GM12878 (cell line): ENCODE measurements at regions of chr3 and their contacts with region 1.

Region 1: DNA sequence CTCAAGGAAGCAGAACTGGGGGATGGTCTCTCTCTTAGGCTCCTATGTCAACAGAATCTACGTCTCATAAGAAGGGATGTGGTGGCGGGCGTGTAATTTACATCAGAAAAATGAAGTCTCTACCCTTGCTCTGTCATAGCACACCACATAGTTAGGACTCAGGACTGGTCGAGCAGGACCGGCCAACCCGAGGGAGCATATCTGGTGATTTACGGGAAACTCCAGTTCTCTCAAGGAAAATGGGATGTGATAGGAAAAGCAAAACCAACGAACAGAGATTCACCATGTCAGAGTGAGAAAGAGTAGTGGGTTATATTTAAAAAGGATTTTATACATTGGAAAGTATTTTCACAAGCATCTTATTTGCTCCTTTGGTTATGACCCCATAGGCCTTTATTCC is 54.7 kb downstream of the IGF2BP2 start:
- DNase-seq: no peak
- ATAC-seq: no peak
- H3K4me3 ChIP-seq: no peak overlapping the region
- H3K27ac ChIP-seq: no peak overlapping the region
- H3K4me1 ChIP-seq: no peaks in the 10 kb centered on the region
- H3K27me3 ChIP-seq: no peaks in the 10 kb centered on the region; a peak in 1 of 4 replicates
- CTCF ChIP-seq: no peak
- EP300 ChIP-seq: no peak
- POLR2A ChIP-seq: no peak
- RAD21 ChIP-seq: no peak

Region 2: GRCh38 chr3:185365291-185366073 is 404.6 kb before region 1 on chr3:
- CTCF ChIA-PET with region 1: no interaction called
- POLR2A ChIA-PET with region 1: no interaction called
- RAD21 ChIA-PET with region 1: no interaction called
- SMC1A ChIA-PET with region 1: no interaction called
- in situ Hi-C with region 1: no loop called
- intact Hi-C with region 1: no loop called
- DNase-seq: no peak
- ATAC-seq: no peak
- H3K4me3 ChIP-seq: peak overlapping the region; percentile 69
- H3K27ac ChIP-seq: peak overlapping the region; percentile 31; the same call in 1 of the 2 replicates
- H3K4me1 ChIP-seq: peaks cover 8% of the 10 kb centered on the region; the same call in 1 of the 2 replicates
- H3K27me3 ChIP-seq: no peaks in the 10 kb centered on the region
- CTCF ChIP-seq: no peak
- EP300 ChIP-seq: no peak
- POLR2A ChIP-seq: no peak
- RAD21 ChIP-seq: no peak

Region 3: GRCh38 chr3:185781759-185782158 is 11.7 kb after region 1 on chr3:
- CTCF ChIA-PET with region 1: interaction called, 28 read pairs
- POLR2A ChIA-PET with region 1: no interaction called
- RAD21 ChIA-PET with region 1: no interaction called
- SMC1A ChIA-PET with region 1: interaction called, 15 read pairs
- in situ Hi-C with region 1: no loop called
- intact Hi-C with region 1: no loop called
- DNase-seq: no peak
- ATAC-seq: no peak
- H3K4me3 ChIP-seq: no peak overlapping the region
- H3K27ac ChIP-seq: no peak overlapping the region
- H3K4me1 ChIP-seq: no peaks in the 10 kb centered on the region
- H3K27me3 ChIP-seq: no peaks in the 10 kb centered on the region; a peak in 1 of 4 replicates
- CTCF ChIP-seq: no peak
- EP300 ChIP-seq: no peak
- POLR2A ChIP-seq: no peak
- RAD21 ChIP-seq: no peak

Region 4: GRCh38 chr3:185786956-185787877 is 17.1 kb after region 1 on chr3:
- CTCF ChIA-PET with region 1: interaction called, 15 read pairs
- POLR2A ChIA-PET with region 1: interaction called, 5 read pairs
- RAD21 ChIA-PET with region 1: no interaction called
- SMC1A ChIA-PET with region 1: interaction called, 4 read pairs
- in situ Hi-C with region 1: no loop called
- intact Hi-C with region 1: no loop called
- DNase-seq: no peak
- ATAC-seq: no peak
- H3K4me3 ChIP-seq: no peak overlapping the region
- H3K27ac ChIP-seq: no peak overlapping the region
- H3K4me1 ChIP-seq: no peaks in the 10 kb centered on the region
- H3K27me3 ChIP-seq: no peaks in the 10 kb centered on the region; a peak in 1 of 4 replicates
- CTCF ChIP-seq: no peak
- EP300 ChIP-seq: no peak
- POLR2A ChIP-seq: no peak
- RAD21 ChIP-seq: no peak

Region 5: GRCh38 chr3:185824476-185825378 is 54.6 kb after region 1 on chr3 and contains the start of gene IGF2BP2:
- CTCF ChIA-PET with region 1: no interaction called
- POLR2A ChIA-PET with region 1: no interaction called
- RAD21 ChIA-PET with region 1: no interaction called
- SMC1A ChIA-PET with region 1: no interaction called
- in situ Hi-C with region 1: no loop called
- intact Hi-C with region 1: no loop called
- DNase-seq: no peak
- ATAC-seq: peak; percentile 89
- H3K4me3 ChIP-seq: peak within 1 kb of the TSS; percentile 47; the same call in 1 of the 2 replicates
- H3K27ac ChIP-seq: no peak within 1 kb of the TSS
- H3K4me1 ChIP-seq: no peaks in the 10 kb centered on the region
- H3K27me3 ChIP-seq: peaks cover 8 to 20% of the 10 kb centered on the region in 2 experiments
- CTCF ChIP-seq: no peak
- EP300 ChIP-seq: no peak
- POLR2A ChIP-seq: no peak
- RAD21 ChIP-seq: no peak
- polyA plus RNA-seq, gene IGF2BP2: not detected

Region 6: DNA sequence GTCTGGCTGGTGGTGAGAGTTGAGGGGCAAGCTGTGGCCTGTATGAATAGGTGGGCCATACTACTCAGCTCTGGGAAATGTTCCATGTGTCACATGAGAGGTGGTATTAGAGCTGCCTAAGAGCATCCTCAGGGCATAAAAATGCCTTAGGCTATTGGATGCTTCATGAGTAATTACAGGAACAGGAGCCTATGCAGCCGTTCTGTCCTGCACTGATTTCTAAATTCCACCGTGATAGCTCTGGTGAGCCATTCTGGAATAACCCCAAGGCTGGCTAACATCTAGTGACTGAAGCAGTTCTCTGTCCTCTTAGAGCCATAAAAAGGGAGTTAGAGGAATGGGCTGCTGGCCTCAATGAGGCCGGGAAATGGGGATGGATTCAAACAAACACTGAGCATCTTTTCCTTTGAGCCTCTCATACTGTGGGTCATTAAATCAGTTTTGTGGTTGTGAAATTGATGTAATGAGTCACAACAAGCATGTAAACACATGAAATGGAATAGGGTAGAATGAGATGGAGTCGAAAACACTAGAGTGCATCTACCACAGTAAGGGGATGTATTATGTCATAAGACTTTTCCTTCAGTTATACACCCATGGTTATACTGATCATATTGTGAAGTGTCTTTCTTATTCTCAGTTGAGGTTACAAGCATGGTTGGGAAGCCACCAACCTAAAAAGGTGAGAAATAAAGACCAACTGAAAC is 550.9 kb after region 1 on chr3:
- CTCF ChIA-PET with region 1: no interaction called
- POLR2A ChIA-PET with region 1: no interaction called
- RAD21 ChIA-PET with region 1: no interaction called
- SMC1A ChIA-PET with region 1: no interaction called
- in situ Hi-C with region 1: no loop called
- intact Hi-C with region 1: no loop called
- DNase-seq: no peak
- ATAC-seq: peak; percentile 57
- H3K4me3 ChIP-seq: no peak overlapping the region
- H3K27ac ChIP-seq: no peak overlapping the region
- H3K4me1 ChIP-seq: no peaks in the 10 kb centered on the region
- H3K27me3 ChIP-seq: no peaks in the 10 kb centered on the region
- CTCF ChIP-seq: no peak
- EP300 ChIP-seq: no peak
- POLR2A ChIP-seq: no peak
- RAD21 ChIP-seq: no peak